Body of pancreas (tissue), 4 donors: ENCODE measurements at regions of chr7 and their contacts with region 1.

Region 1: GRCh38 chr7:43925984-43926797 is at the start of gene UBE2D4:
- DNase-seq: peak; percentile 90 to 95 (median 91)
- ATAC-seq: peak; percentile 93
- H3K4me3 ChIP-seq: peak within 1 kb of the TSS; percentile 47 to 49
- H3K27ac ChIP-seq: peak within 1 kb of the TSS; percentile 91 to 98 (median 97)
- H3K4me1 ChIP-seq: peaks cover 42% of the 10 kb centered on the region
- H3K27me3 ChIP-seq: no peaks in the 10 kb centered on the region
- CTCF ChIP-seq: peak in 1 of 7 experiments; percentile 6
- POLR2A ChIP-seq: peak; percentile 99
- total RNA-seq, gene UBE2D4: 16.5 to 18.4 TPM

Region 2: GRCh38 chr7:43869006-43869866 is 57.0 kb before region 1 on chr7 and contains the start of gene MRPS24:
- intact Hi-C with region 1: loop called (anchors 10 kb)
- DNase-seq: peak; percentile 95 to 98 (median 96)
- ATAC-seq: peak; percentile 100
- H3K4me3 ChIP-seq: peak within 1 kb of the TSS; percentile 92 to 98
- H3K27ac ChIP-seq: peak within 1 kb of the TSS; percentile 36 to 83 (median 76)
- H3K4me1 ChIP-seq: peaks cover 16% of the 10 kb centered on the region
- H3K27me3 ChIP-seq: no peaks in the 10 kb centered on the region
- CTCF ChIP-seq: peak in 1 of 7 experiments; percentile 11
- POLR2A ChIP-seq: peak; percentile 32 to 68 (median 68)
- total RNA-seq, gene MRPS24: 81.7 to 99.9 TPM